ENCODE measurements at regions of chr13 and their contacts with region 1.

Region 1: GRCh38 chr13:44969551-44970484 is 19.5 kb downstream of the NUFIP1 start:
- DNase-seq: no peak
- H3K4me3 ChIP-seq: no peak overlapping the region
- H3K27ac ChIP-seq: peak overlapping the region; percentile 45
- H3K4me1 ChIP-seq: peaks cover 4% of the 10 kb centered on the region
- H3K27me3 ChIP-seq: no peaks in the 10 kb centered on the region
- CTCF ChIP-seq: peak; percentile 72 to 85 (median 82)
- POLR2A ChIP-seq: no peak

Region 2: DNA sequence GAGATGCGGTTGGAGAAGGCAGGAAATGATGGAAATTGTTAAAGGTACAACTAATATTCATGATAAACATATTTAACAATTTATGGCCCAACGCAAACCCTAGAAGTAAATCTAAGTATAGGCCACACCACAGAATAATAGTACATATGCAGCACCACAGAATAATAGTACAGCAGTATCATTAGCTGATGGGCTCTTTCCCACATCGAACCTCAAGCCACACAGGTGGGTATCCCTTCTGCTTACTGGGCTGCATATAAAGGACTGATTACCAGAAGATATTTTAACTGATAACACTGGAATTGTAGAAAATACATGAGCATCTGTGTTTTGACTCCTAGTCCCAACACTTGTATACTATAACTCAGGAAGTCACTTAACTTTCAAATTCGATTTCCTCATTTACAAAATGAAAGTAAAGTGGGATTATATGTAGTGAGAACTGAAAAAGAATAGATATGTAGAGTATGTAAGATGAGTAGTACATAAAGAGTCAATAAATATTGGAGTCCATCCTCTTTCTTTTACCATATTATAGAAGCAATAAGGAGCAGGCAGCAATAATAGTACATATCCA is 485.2 kb before region 1 on chr13:
- intact Hi-C with region 1: loop called (anchors 10 kb)
- DNase-seq: no peak
- H3K4me3 ChIP-seq: no peak overlapping the region
- H3K27ac ChIP-seq: no peak overlapping the region
- H3K4me1 ChIP-seq: no peaks in the 10 kb centered on the region
- H3K27me3 ChIP-seq: no peaks in the 10 kb centered on the region
- CTCF ChIP-seq: no peak
- POLR2A ChIP-seq: no peak

Region 3: GRCh38 chr13:44917589-44918325 is 52.1 kb before region 1 on chr13:
- intact Hi-C with region 1: loop called (anchors 5 kb)
- DNase-seq: peak in 1 of 2 donors; percentile 99
- H3K4me3 ChIP-seq: peak overlapping the region; percentile 50 to 63
- H3K27ac ChIP-seq: peak overlapping the region; percentile 98
- H3K4me1 ChIP-seq: peaks cover 26% of the 10 kb centered on the region
- H3K27me3 ChIP-seq: no peaks in the 10 kb centered on the region
- CTCF ChIP-seq: peak in 1 of 3 experiments; percentile 81
- POLR2A ChIP-seq: peak in 1 of 2 donors; percentile 59

Region 4: DNA sequence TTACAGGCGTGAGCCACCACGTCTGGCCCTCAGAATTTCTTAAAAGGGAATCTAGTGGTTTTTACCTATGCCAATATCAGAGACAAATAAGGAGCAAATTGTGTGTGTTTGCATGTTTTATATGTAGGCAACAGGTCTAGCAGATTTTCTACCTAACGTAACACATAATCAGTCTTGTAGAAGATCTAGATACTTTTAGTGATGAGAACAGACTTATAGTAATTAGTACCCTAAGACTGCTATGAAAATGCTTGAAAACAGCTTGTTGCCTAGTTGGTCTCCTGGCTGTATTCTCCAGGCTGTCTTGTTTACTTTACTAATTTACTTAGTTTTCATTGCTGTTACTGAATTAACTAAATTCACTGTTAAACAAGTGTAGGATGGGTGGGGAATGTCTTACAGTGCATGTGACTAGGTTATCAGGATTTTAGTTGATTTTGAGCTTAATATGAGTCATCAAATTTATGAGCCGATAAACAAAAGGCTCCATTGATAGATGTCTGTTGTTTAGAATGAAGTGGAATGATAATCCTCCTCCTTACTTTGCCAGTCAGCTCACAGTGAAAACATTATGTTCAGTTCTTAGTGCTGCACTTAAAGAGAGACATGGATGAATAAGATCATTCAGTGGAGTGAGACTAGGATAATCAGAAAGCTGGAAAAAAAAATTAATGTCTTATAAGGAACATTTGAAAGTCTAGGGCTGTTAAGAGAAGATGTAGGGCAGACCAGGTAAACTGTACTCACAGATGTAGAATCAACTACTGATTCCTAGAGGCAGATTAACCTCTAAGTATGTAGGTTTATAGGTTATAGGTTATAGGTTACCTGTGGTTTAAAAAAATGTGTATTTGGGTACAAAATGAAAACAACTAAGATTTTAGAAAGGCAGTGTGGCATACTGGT is 172.9 kb after region 1 on chr13:
- intact Hi-C with region 1: no loop called
- DNase-seq: no peak
- H3K4me3 ChIP-seq: no peak overlapping the region
- H3K27ac ChIP-seq: no peak overlapping the region
- H3K4me1 ChIP-seq: no peaks in the 10 kb centered on the region
- H3K27me3 ChIP-seq: no peaks in the 10 kb centered on the region
- CTCF ChIP-seq: no peak
- POLR2A ChIP-seq: no peak

Measured in vagina (tissue), 2 donors.